Testis (tissue), 5 donors: ENCODE measurements at regions of chr14 and their contacts with region 1.

Region 1: DNA sequence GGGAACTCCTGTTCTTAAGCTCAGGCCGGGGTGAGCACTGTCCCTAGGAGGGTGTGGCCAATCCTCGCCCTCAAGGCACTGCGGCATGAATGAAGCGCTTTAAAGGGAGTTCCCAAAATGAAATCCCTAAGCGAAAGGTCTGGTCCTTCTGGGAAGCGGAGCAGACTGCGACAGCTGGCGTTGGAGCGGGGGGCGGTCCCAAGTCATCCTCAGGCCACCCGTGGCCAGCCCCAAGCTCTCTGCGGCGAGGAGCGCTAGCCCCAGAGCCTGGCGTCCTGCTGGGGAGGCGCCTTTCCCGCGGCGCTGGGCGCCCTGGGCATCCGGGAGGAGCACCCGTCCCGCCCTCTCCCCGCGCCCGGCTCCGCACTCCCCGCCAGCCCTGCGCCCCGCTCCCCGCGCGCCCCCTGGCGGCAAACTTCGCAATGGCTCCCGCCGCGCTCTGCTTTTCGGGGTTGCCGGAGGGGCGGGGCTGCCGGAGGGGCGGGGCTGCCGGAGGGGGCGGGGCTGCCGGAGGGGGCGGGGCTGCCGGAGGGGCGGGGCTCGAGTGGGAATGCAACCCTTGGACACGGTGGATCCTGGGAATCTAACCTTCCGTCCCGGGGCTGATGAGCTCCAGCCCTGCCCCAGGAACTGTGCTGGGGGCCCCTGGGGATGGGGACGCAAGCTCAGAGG is 25.4 kb downstream of the ZBTB42 start:
- DNase-seq: peak; percentile 90
- H3K4me3 ChIP-seq: peak overlapping the region; percentile 54 to 60
- H3K27ac ChIP-seq: no peak overlapping the region
- H3K4me1 ChIP-seq: peaks cover 15% of the 10 kb centered on the region
- H3K27me3 ChIP-seq: no peaks in the 10 kb centered on the region
- CTCF ChIP-seq: peak; percentile 74 to 91 (median 79)
- POLR2A ChIP-seq: no peak

Region 2: DNA sequence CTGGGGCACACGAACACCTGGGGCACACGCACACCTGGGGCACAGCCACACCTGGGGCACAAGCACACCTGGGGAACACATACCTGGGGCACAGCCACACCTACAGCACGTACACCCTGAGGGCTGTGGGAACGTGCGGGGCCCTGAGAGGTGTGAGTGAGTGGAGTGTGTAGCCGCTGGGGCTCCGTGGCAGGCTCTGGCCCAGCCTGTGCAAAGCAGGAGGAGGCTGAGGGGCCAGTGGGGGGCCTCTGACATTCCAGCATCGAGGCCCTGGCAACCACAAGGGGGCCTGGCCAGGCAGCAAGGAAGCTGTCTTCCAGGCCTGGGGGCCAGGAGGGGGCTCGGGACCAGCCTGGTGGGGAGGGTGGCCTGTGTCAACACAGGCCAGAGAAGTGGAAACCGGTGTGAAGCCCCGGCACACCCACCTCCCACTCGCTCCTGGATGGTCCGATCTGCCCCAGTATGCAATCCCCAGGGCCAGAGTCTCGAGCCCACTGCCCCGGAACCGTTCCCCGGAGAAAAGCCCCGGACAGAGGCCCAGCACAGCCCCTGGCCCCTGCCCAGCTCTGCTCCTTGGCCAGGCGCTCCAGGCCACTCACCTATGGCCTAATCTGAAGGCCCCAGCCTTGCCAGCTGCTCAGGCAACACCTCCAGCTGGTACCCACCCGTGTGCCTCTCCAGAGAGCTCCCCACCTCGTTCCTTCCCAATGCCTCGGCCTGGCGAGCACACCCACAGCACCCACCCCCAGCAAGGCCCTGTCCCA is 48.7 kb before region 1 on chr14:
- intact Hi-C with region 1: loop called (anchors 5 kb)
- DNase-seq: no peak
- H3K4me3 ChIP-seq: no peak overlapping the region
- H3K27ac ChIP-seq: no peak overlapping the region
- H3K4me1 ChIP-seq: no peaks in the 10 kb centered on the region
- H3K27me3 ChIP-seq: no peaks in the 10 kb centered on the region
- CTCF ChIP-seq: no peak
- POLR2A ChIP-seq: no peak

Region 3: DNA sequence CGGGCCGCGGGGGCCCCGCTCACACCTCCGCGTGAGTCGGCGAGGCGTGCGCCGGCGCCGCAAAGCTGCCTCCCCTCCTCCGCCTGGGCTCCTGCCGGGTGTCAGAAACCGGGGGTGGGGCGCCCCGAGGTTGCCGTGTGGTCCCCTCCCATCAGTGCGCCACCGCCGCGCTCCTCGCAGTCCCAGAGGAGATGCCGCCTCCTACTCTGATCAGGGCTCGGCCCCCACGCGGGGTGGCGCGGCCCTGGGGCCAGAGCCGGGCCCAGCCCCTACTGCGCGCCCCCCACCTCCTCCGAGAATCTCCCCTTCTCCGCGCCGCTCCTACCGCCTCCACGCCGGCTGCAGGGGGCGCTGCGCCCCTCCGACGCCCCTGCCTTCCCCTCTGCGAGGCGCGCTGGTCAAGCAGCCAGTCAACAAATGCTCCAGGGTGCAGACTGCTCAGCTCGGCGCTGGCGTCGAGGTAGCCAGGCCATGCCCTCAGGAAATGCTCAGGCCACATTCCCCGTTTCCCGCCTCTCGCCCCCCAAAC is 342.7 kb after region 1 on chr14:
- intact Hi-C with region 1: no loop called
- DNase-seq: no peak
- H3K4me3 ChIP-seq: peak overlapping the region; percentile 24 to 26
- H3K27ac ChIP-seq: no peak overlapping the region
- H3K4me1 ChIP-seq: peaks cover 4% of the 10 kb centered on the region
- H3K27me3 ChIP-seq: no peaks in the 10 kb centered on the region
- CTCF ChIP-seq: peak in 1 of 3 experiments; percentile 15
- POLR2A ChIP-seq: no peak